ENCODE measurements at regions of chr17 and their contacts with region 1.

Region 1: GRCh38 chr17:1648963-1649843 is 463 bp downstream of the RILP start:
- DNase-seq: peak; percentile 86 to 94
- ATAC-seq: peak; percentile 55 to 66
- H3K4me3 ChIP-seq: peak overlapping the region; percentile 64 to 96 (median 80)
- H3K27ac ChIP-seq: peak overlapping the region; percentile 95 to 100 (median 99)
- H3K4me1 ChIP-seq: peaks cover 33 to 36% of the 10 kb centered on the region in 2 donors
- H3K27me3 ChIP-seq: no peaks in the 10 kb centered on the region
- CTCF ChIP-seq: peak in 2 of 5 experiments; percentile 88 to 98
- POLR2A ChIP-seq: peak; percentile 84 to 86

Region 2: GRCh38 chr17:1267471-1267947 is 381.7 kb before region 1 on chr17:
- in situ Hi-C with region 1: loop called in 2 of 4 experiments (anchors 25 kb)
- intact Hi-C with region 1: loop called (anchors 5 kb)
- DNase-seq: peak; percentile 14 to 42
- ATAC-seq: peak; percentile 29 to 58
- H3K4me3 ChIP-seq: peak overlapping the region; percentile 66 to 82 (median 81)
- H3K27ac ChIP-seq: peak overlapping the region; percentile 82 to 85 (median 84)
- H3K4me1 ChIP-seq: peaks cover 0 to 6% of the 10 kb centered on the region in 2 donors
- H3K27me3 ChIP-seq: peaks cover 12 to 20% (median 16%) of the 10 kb centered on the region in 3 donors
- CTCF ChIP-seq: no peak
- POLR2A ChIP-seq: no peak

Region 3: DNA sequence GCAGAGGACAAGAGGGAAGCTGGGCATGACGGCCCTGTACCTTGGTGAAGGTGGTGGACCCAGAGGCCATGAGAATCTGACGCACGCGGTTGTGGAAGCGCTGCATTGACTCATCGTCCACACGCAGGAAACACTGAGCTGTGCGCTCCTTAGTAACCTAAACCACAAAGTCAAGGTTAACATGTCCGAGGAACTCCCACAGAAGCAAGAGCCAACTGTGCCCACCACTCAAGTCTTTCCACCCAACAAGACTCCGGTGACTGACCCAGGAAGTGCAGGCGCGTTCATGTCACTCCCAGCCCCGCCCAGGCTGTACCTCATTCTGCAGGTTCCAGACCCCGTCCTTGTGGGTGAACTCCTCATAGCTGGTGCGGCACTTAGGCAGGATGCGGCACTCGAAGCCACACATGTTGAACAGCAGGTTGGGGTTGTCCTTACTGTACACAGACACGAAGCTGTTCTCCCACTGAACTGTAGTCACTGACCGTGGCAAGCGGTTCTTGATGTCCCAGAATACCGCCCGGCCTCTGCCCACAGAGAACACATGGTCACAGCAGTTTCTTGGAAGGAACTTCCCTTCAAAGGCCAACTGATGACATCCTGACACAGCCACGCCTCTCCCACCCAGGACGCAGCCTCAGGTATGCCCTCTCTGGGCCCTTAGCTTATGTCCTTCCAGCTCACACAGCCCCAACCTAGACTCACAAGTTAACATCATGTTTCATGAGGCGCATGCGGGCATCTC is 24.0 kb after region 1 on chr17:
- in situ Hi-C with region 1: no loop called
- intact Hi-C with region 1: loop called (anchors 2 kb)
- DNase-seq: peak in 1 of 2 donors; percentile 25
- ATAC-seq: no peak
- H3K4me3 ChIP-seq: no peak overlapping the region
- H3K27ac ChIP-seq: peak overlapping the region; percentile 8 to 91 (median 38)
- H3K4me1 ChIP-seq: peaks cover 13 to 25% of the 10 kb centered on the region in 2 donors
- H3K27me3 ChIP-seq: no peaks in the 10 kb centered on the region
- CTCF ChIP-seq: no peak
- POLR2A ChIP-seq: no peak

Region 4: DNA sequence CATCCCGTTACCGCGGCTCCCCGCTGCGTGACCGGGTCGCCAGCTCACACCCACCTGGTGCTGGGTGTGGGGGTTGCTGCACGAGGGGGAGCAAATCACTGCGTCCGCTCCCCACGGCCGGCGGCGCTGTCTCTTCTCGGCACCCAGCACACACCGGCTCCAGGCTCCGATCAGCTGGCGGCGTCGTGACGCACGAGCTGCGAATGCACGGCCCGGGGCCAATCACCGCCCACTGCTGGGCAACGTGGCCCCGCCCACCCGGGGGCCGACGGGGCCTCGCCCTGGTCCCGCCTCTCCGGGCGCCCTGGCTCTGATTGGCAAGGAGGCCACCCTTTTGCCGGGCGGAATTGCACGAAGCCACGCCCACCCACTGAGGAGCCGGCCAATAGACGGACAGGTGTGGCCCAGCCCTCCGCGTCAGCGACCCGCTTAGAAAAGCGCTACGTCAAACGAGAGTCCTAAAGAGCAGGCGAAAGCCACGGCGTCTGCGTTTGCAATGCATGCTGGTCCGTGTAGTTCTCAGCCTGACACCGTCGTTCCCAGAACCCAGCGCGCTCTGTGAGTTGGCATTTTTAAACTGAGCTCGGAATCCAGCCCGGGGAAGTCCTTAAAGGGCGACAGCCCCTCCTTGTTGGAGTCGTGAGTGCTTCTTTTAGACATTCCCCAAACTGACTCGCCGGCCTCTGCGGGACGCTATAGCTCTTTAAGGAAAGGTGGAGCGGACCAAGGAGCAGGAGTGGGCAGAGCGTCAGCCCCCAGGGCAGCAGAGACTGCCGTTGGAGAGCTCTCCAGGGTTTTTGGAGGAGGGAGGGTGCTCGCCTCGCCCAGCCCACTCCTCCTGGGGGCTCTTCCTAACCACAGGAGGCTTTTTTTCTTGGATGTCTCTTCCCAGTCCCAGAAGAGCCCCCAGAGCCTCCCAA is 67.1 kb after region 1 on chr17:
- in situ Hi-C with region 1: no loop called
- intact Hi-C with region 1: loop called (anchors 1 kb)
- DNase-seq: peak; percentile 100
- ATAC-seq: peak; percentile 47 to 59
- H3K4me3 ChIP-seq: peak overlapping the region; percentile 91 to 95 (median 94)
- H3K27ac ChIP-seq: peak overlapping the region; percentile 99 to 100 (median 100)
- H3K4me1 ChIP-seq: peaks cover 52 to 55% of the 10 kb centered on the region in 2 donors
- H3K27me3 ChIP-seq: no peaks in the 10 kb centered on the region
- CTCF ChIP-seq: no peak
- POLR2A ChIP-seq: peak; percentile 99 to 100

Region 5: DNA sequence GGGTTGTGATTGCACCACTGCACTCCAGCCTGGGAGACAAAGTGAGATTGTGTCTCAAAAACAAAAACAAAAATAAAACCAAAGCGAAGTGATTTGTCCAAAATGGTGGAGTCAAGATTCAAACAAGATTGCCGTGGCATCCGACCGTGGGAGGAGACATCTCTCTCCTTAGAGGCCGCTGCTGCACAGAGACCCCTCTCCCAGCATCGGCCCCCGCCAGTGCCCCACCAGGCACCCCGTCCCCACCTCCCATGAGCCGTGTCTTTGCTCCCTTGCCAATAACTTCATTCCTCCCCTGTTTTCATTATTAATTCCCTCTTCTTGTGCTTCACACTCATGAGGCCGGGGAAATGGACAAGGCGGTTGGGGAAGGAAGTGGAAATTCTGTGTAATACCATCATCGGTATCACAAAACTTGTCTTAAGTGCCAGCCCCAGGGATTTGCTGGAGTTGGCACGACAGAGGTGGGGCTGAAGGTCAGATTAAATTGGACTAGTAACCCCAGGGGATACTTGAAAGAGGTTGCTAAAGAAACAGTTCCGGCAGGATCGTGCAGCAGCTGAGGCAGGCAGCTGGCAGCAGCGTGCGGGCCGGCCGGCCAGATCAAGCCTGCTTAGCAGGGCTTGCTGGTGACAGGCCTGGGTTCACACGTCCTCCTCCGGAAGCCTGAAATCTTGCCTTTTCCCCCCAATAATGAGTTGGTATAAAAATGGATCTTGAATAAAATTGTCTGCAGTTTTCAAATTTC is 309.1 kb after region 1 on chr17:
- in situ Hi-C with region 1: no loop called
- intact Hi-C with region 1: no loop called
- DNase-seq: no peak
- ATAC-seq: no peak
- H3K4me3 ChIP-seq: no peak overlapping the region
- H3K27ac ChIP-seq: no peak overlapping the region
- H3K4me1 ChIP-seq: no peaks in the 10 kb centered on the region
- H3K27me3 ChIP-seq: no peaks in the 10 kb centered on the region
- CTCF ChIP-seq: no peak
- POLR2A ChIP-seq: no peak

Region 6: DNA sequence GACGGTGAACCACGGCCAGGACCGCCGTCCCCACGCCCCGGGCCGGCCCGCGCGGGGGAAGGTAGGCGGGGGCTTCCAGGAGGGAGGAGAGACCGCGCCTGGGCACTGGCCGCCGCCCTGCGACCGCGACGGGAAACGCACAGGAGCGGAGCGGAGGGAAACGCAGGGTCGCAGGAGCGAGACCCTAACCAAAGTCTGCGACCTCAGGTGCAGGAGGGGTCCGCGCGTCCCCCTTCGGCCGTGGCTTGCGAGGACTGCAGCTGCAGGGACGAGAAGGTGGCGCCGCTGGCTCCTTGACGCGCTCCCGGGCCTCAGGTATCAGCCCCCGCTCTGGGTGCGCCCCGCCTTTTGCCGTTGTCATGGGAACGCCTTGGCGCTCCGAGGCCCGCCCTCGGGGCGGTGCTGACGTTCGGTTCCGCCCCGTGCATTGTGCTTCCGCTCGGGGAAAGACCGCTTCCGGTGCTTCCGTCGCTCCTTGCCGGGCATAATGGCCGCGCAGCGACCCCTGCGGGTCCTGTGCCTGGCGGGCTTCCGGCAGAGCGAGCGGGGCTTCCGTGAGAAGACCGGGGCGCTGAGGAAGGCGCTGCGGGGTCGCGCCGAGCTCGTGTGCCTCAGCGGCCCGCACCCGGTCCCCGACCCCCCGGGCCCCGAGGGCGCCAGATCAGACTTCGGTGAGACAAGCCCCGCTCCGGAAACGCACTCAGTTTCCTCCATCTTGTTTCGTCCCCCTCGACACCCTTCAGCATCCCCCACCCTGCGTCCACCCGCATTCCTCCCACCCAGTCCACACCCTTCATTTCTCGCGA is 392.6 kb after region 1 on chr17 and contains the start of gene OVCA2:
- in situ Hi-C with region 1: loop called in 3 of 4 experiments (anchors 25 kb)
- intact Hi-C with region 1: no loop called
- DNase-seq: peak; percentile 85 to 87
- ATAC-seq: peak; percentile 88 to 93
- H3K4me3 ChIP-seq: peak within 1 kb of the TSS; percentile 72 to 100 (median 80)
- H3K27ac ChIP-seq: peak within 1 kb of the TSS; percentile 85 to 97 (median 92)
- H3K4me1 ChIP-seq: peaks cover 26% of the 10 kb centered on the region in 2 donors
- H3K27me3 ChIP-seq: no peaks in the 10 kb centered on the region
- CTCF ChIP-seq: peak; percentile 48 to 69 (median 63)
- POLR2A ChIP-seq: peak; percentile 55 to 67
- total RNA-seq, gene OVCA2: 12.6 to 50.2 (median 34.4) TPM